MCF 10A (cell line): ENCODE measurements at regions of chr6 and their contacts with region 1.

Region 1: DNA sequence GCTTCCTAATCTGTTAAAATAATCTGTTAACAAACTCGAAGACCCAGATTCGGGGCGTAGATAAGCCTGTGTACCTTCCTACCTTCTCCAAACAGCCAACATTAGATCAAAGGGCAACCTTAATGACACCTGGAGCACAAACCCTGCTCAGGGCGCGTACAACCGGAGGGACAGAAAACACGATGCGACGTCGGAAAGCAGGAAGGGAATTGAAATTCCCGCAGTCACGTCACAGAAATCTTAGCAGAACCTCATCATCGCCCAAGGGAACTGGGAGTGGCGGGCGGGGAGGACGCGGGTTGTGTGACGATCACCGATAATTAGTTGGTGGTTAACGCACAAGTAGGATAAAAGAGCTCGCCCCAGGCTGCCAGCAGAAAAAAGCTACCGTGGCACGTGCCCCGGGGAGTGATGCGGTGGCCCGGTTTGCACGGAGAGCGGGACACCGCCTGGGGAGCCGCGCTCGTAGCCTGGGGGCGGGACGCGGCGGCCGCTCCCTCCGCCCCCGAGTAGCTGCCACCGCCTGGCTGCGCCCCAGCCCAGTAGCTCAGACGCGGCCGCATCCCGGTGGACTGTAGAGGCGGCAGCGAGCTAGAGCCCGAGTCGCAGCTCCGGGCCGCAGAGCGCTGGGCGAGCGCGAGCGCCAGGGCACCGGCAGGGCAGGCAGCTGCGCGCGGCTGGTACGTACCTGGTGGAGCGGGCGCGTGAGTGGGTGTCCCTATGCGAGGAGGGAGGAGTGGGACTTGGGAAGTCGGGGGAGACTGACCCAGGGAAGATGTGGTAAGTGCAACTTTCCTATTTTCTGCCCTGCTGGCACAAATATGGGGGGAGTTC is at the start of gene PKIB:
- DNase-seq: peak; percentile 80
- H3K4me3 Mint-ChIP-seq: peak within 1 kb of the TSS; percentile 85
- H3K27ac Mint-ChIP-seq: peak within 1 kb of the TSS; percentile 59
- H3K4me1 Mint-ChIP-seq: peaks cover 3% of the 10 kb centered on the region
- H3K27me3 Mint-ChIP-seq: no peaks in the 10 kb centered on the region
- CTCF ChIP-seq: peak; percentile 27
- total RNA-seq, gene PKIB: 3.1 and 6.0 TPM in 2 replicates

Region 2: DNA sequence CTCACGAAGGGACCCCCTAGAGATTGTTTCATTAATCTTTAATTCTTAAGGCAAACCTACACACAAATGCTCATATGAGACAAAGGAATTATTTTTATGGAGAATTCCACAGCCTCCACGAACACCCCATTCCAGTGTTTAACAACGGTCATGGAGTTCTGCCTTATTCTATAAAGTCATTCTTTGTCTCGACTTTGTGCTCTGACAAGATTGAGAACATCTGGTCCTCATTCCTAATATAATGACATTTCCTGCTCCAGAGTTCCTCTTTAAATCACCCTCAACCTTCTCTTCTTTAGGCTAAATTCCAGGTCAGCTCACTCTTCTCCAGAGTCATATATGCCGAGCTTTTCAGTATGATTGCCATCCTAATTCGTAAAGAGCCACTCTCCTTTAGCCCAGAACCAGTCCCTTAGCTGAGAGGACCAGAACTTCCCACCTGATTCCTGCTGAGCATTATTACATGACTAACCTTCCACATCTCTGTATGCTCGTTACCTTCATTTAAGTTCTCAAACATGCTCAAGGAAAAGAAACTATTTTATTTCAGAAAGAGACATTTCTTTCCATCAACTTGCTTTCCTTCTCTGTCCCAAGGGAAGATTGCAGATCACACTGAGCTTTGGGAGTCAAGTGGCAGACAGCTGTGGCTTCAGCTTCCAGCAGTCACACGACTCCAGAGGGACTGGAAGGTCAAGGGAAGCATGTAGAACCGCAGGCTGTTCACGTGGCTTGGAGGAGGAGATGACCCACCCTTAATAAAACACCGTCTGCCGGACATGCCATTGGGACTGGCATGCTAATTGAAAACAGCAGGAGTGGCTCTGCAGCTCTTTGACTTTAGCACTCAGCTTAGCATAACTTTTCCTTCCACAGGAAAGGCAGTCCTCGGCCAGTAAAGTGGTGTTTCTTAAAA is 677.7 kb before region 1 on chr6:
- CTCF ChIA-PET with region 1: no interaction called
- POLR2A ChIA-PET with region 1: no interaction called
- intact Hi-C with region 1: no loop called
- DNase-seq: peak; percentile 28
- H3K4me3 Mint-ChIP-seq: no peak overlapping the region
- H3K27ac Mint-ChIP-seq: no peak overlapping the region
- H3K4me1 Mint-ChIP-seq: no peaks in the 10 kb centered on the region
- H3K27me3 Mint-ChIP-seq: no peaks in the 10 kb centered on the region
- CTCF ChIP-seq: no peak

Region 3: GRCh38 chr6:122696079-122696478 is 86.0 kb after region 1 on chr6:
- CTCF ChIA-PET with region 1: interaction called, 12 read pairs
- POLR2A ChIA-PET with region 1: no interaction called
- intact Hi-C with region 1: no loop called
- DNase-seq: peak; percentile 60
- H3K4me3 Mint-ChIP-seq: no peak overlapping the region
- H3K27ac Mint-ChIP-seq: peak overlapping the region; percentile 39
- H3K4me1 Mint-ChIP-seq: peaks cover 16% of the 10 kb centered on the region
- H3K27me3 Mint-ChIP-seq: no peaks in the 10 kb centered on the region
- CTCF ChIP-seq: no peak